ENCODE measurements at regions of chr6 and their contacts with region 1.

Region 1: GRCh38 chr6:2848851-2849250 is 7.2 kb upstream of the SERPINB1 start:
- DNase-seq: peak; percentile 81
- H3K4me3 Mint-ChIP-seq: peak overlapping the region; percentile 43
- H3K27ac Mint-ChIP-seq: peak overlapping the region; percentile 74
- H3K4me1 Mint-ChIP-seq: peaks cover 49% of the 10 kb centered on the region
- H3K27me3 Mint-ChIP-seq: no peaks in the 10 kb centered on the region

Region 2: GRCh38 chr6:2791124-2791974 is 57.5 kb before region 1 on chr6:
- CTCF ChIA-PET with region 1: interaction called, 38 read pairs
- POLR2A ChIA-PET with region 1: no interaction called
- DNase-seq: peak; percentile 71
- H3K4me3 Mint-ChIP-seq: no peak overlapping the region
- H3K27ac Mint-ChIP-seq: peak overlapping the region; percentile 57
- H3K4me1 Mint-ChIP-seq: peaks cover 41% of the 10 kb centered on the region
- H3K27me3 Mint-ChIP-seq: no peaks in the 10 kb centered on the region

Region 3: DNA sequence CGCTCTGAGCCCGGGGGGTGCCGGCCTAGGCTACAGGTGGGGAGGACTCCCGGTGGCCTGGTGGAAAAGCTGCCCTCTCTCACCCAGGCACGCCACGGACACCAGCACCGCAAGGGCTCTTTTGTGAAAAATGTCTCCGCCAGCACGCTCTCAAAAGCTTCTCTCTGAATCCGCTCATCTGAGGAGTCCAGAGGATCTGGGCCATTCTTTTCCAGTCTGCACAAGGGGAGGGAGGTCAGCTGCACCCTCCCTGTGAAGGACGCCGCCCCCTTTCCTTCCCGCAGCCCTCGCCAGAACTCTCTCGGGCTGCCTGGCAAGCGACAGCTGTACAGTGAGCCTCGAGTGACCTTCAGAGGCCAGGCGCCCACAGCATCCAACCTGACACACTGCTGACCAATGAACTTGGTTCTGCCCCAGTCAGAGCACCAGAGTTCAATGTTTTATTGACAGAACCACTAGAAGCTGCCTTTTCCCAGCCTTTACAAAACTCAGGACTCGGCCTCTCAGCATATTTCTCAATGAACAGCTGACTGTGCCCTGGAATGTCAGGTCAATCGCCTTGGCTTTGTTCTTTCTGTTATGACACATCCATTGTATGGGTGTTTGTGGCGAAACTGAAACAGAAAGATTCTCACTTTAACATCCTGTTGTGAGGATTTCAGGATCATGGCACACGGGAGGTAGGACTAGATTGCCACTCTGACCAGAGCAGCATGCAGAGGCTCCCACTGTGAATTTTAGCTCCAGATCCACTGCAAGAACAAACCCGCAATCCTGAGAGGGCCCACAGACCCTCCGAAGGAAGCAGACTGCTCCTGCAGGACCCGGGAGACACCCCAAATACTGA is 27.6 kb after region 1 on chr6:
- CTCF ChIA-PET with region 1: interaction called, 4 read pairs
- POLR2A ChIA-PET with region 1: interaction called, 15 read pairs
- DNase-seq: no peak
- H3K4me3 Mint-ChIP-seq: peak overlapping the region; percentile 81
- H3K27ac Mint-ChIP-seq: peak overlapping the region; percentile 91
- H3K4me1 Mint-ChIP-seq: peaks cover 77% of the 10 kb centered on the region
- H3K27me3 Mint-ChIP-seq: no peaks in the 10 kb centered on the region

Region 4: GRCh38 chr6:2900821-2901644 is 52.2 kb after region 1 on chr6:
- CTCF ChIA-PET with region 1: interaction called, 17 read pairs
- POLR2A ChIA-PET with region 1: interaction called, 18 read pairs
- DNase-seq: no peak
- H3K4me3 Mint-ChIP-seq: peak overlapping the region; percentile 99
- H3K27ac Mint-ChIP-seq: peak overlapping the region; percentile 82
- H3K4me1 Mint-ChIP-seq: peaks cover 55% of the 10 kb centered on the region
- H3K27me3 Mint-ChIP-seq: peaks cover 3% of the 10 kb centered on the region

Region 5: GRCh38 chr6:2917065-2917464 is 68.2 kb after region 1 on chr6:
- CTCF ChIA-PET with region 1: interaction called, 62 read pairs
- POLR2A ChIA-PET with region 1: interaction called, 6 read pairs
- DNase-seq: no peak
- H3K4me3 Mint-ChIP-seq: no peak overlapping the region
- H3K27ac Mint-ChIP-seq: no peak overlapping the region
- H3K4me1 Mint-ChIP-seq: peaks cover 23% of the 10 kb centered on the region
- H3K27me3 Mint-ChIP-seq: peaks cover 4% of the 10 kb centered on the region

Region 6: GRCh38 chr6:2940010-2940850 is 91.4 kb after region 1 on chr6:
- CTCF ChIA-PET with region 1: interaction called, 170 read pairs
- POLR2A ChIA-PET with region 1: interaction called, 13 read pairs
- DNase-seq: peak; percentile 81
- H3K4me3 Mint-ChIP-seq: peak overlapping the region; percentile 69
- H3K27ac Mint-ChIP-seq: peak overlapping the region; percentile 94
- H3K4me1 Mint-ChIP-seq: peaks cover 57% of the 10 kb centered on the region
- H3K27me3 Mint-ChIP-seq: peaks cover 31% of the 10 kb centered on the region